ENCODE measurements at regions of chr3 and their contacts with region 1.

Region 1: GRCh38 chr3:4978204-4978965 is 852 bp upstream of the BHLHE40 start:
- DNase-seq: peak; percentile 95
- ATAC-seq: peak; percentile 59
- H3K4me3 Mint-ChIP-seq: peak overlapping the region; percentile 91
- H3K27ac Mint-ChIP-seq: peak overlapping the region; percentile 96
- H3K4me1 Mint-ChIP-seq: peaks cover 38% of the 10 kb centered on the region
- H3K27me3 Mint-ChIP-seq: no peaks in the 10 kb centered on the region

Region 2: GRCh38 chr3:4722103-4722502 is 256.3 kb before region 1 on chr3:
- CTCF ChIA-PET with region 1: interaction called, 258 read pairs
- POLR2A ChIA-PET with region 1: interaction called, 35 read pairs
- DNase-seq: peak; percentile 61
- ATAC-seq: peak; percentile 85
- H3K4me3 Mint-ChIP-seq: no peak overlapping the region
- H3K27ac Mint-ChIP-seq: peak overlapping the region; percentile 66
- H3K4me1 Mint-ChIP-seq: peaks cover 62% of the 10 kb centered on the region
- H3K27me3 Mint-ChIP-seq: no peaks in the 10 kb centered on the region

Region 3: GRCh38 chr3:4834403-4834866 is 143.9 kb before region 1 on chr3:
- CTCF ChIA-PET with region 1: interaction called, 272 read pairs
- POLR2A ChIA-PET with region 1: interaction called, 737 read pairs
- DNase-seq: peak; percentile 89
- ATAC-seq: peak; percentile 59
- H3K4me3 Mint-ChIP-seq: peak overlapping the region; percentile 65
- H3K27ac Mint-ChIP-seq: peak overlapping the region; percentile 92
- H3K4me1 Mint-ChIP-seq: peaks cover 91% of the 10 kb centered on the region
- H3K27me3 Mint-ChIP-seq: no peaks in the 10 kb centered on the region

Region 4: GRCh38 chr3:4898454-4899313 is 79.7 kb before region 1 on chr3:
- CTCF ChIA-PET with region 1: interaction called, 9 read pairs
- POLR2A ChIA-PET with region 1: interaction called, 14 read pairs
- DNase-seq: no peak
- ATAC-seq: peak; percentile 75
- H3K4me3 Mint-ChIP-seq: no peak overlapping the region
- H3K27ac Mint-ChIP-seq: peak overlapping the region; percentile 19
- H3K4me1 Mint-ChIP-seq: peaks cover 59% of the 10 kb centered on the region
- H3K27me3 Mint-ChIP-seq: no peaks in the 10 kb centered on the region

Region 5: DNA sequence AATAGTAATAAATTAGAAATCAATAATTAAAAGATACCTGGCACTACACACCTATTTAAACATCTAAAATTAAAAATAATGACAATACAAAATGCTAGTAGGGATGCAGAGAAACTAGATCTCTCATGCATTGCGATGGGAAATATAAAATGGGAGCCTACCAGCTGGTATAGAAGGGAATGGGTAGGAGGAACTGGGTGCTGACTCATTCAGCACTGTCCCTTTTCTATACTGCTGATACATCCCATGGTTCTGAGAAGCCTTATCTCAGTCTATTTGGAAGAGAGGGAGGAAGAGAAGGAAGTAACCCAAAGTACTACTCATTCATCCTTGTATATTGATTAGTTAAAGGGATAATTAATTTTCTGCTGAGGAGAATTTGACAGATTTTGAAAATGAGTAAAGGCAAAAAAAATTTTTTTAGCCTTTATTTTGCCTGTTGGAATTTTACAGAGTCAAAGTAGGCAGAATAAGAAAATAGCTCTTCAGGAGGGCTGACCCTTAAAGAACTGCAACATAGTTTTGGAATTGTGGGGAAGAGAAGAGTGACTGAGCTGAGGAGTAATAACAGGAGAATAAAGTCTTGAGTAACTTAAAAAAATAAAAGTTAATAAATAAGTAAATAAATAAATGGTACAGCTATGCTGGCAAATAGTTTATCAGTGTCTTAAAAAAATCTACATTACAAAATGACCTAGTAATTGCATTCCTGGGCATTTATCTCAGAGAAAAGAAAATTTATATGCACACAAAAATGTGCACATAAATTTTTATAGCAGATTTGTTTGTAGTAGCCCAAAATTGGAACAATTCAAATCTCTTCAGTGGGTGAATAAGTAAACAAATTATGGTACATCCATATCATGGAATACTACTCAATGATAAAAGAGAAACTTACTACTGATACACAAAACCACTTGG is 14.5 kb before region 1 on chr3:
- CTCF ChIA-PET with region 1: interaction called, 19 read pairs
- POLR2A ChIA-PET with region 1: interaction called, 3 read pairs
- DNase-seq: no peak
- ATAC-seq: no peak
- H3K4me3 Mint-ChIP-seq: no peak overlapping the region
- H3K27ac Mint-ChIP-seq: no peak overlapping the region
- H3K4me1 Mint-ChIP-seq: peaks cover 15% of the 10 kb centered on the region
- H3K27me3 Mint-ChIP-seq: no peaks in the 10 kb centered on the region

Region 6: GRCh38 chr3:5026331-5027218 is 48.2 kb after region 1 on chr3:
- CTCF ChIA-PET with region 1: interaction called, 123 read pairs
- POLR2A ChIA-PET with region 1: interaction called, 450 read pairs
- DNase-seq: peak; percentile 68
- ATAC-seq: peak; percentile 77
- H3K4me3 Mint-ChIP-seq: peak overlapping the region; percentile 76
- H3K27ac Mint-ChIP-seq: peak overlapping the region; percentile 86
- H3K4me1 Mint-ChIP-seq: peaks cover 56% of the 10 kb centered on the region
- H3K27me3 Mint-ChIP-seq: no peaks in the 10 kb centered on the region

Region 7: GRCh38 chr3:5357089-5357488 is 378.7 kb after region 1 on chr3:
- CTCF ChIA-PET with region 1: no interaction called
- POLR2A ChIA-PET with region 1: no interaction called
- DNase-seq: no peak
- ATAC-seq: no peak
- H3K4me3 Mint-ChIP-seq: no peak overlapping the region
- H3K27ac Mint-ChIP-seq: no peak overlapping the region
- H3K4me1 Mint-ChIP-seq: no peaks in the 10 kb centered on the region
- H3K27me3 Mint-ChIP-seq: peaks cover 3% of the 10 kb centered on the region

Measured in activated CD8-positive, alpha-beta T cell treated with anti-CD3 and anti-CD28 coated beads, Interleukin-2, amount 10 ng/mL, durations not matched to agents 7 days and 5 days (primary cell).